H1 (cell line): ENCODE measurements at regions of chr14 and their contacts with region 1.

Region 1: GRCh38 chr14:58297762-58298476 is 436 bp upstream of the ARID4A start:
- DNase-seq: peak; percentile 94 to 99
- H3K4me3 ChIP-seq: peak overlapping the region; percentile 81 to 99 (median 92)
- H3K27ac ChIP-seq: peak overlapping the region; percentile 98
- H3K4me1 ChIP-seq: peaks cover 0 to 3% (median 0%) of the 10 kb centered on the region in 4 experiments; a peak in 2 of 7 replicates
- H3K27me3 ChIP-seq: no peaks in the 10 kb centered on the region
- CTCF ChIP-seq: no peak
- EP300 ChIP-seq: peak in 1 of 2 experiments; percentile 51; a peak in 1 of 3 replicates
- POLR2A ChIP-seq: peak; percentile 70 to 96; a peak in 2 of 3 replicates
- RAD21 ChIP-seq: no peak

Region 2: GRCh38 chr14:58244556-58245387 is 53.1 kb before region 1 on chr14 and contains the start of gene PSMA3:
- CTCF ChIA-PET with region 1: no interaction called
- POLR2A ChIA-PET with region 1: interaction called, 34 read pairs
- DNase-seq: peak; percentile 88 to 96
- H3K4me3 ChIP-seq: peak within 1 kb of the TSS; percentile 84 to 97 (median 88)
- H3K27ac ChIP-seq: peak within 1 kb of the TSS; percentile 92
- H3K4me1 ChIP-seq: peaks cover 0 to 5% (median 0%) of the 10 kb centered on the region in 4 experiments; a peak in 1 of 7 replicates
- H3K27me3 ChIP-seq: no peaks in the 10 kb centered on the region
- CTCF ChIP-seq: no peak
- EP300 ChIP-seq: no peak
- POLR2A ChIP-seq: peak; percentile 94 to 98
- RAD21 ChIP-seq: no peak
- total RNA-seq, gene PSMA3: 283 and 285 TPM in 2 replicates

Region 3: DNA sequence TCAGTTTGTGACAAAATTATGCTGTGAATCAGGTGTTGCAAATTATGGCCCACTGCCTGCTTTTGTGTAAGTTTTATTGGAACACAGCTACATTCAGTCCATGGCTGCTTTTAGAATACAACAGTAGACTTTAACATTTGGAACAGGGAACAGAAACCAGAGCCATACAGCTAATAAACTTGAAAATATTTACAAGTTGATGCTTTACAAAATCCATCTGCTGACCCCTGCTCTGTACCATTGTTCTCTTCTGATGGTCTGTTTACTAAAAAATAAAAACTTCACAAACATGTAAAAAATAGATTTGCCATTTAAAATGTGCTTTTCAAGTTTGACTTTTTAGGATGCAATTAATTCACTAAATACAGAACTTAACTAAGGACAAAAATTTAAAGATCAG is 32.5 kb before region 1 on chr14:
- CTCF ChIA-PET with region 1: no interaction called
- POLR2A ChIA-PET with region 1: interaction called, 25 read pairs
- DNase-seq: no peak
- H3K4me3 ChIP-seq: no peak overlapping the region
- H3K27ac ChIP-seq: no peak overlapping the region
- H3K4me1 ChIP-seq: no peaks in the 10 kb centered on the region
- H3K27me3 ChIP-seq: no peaks in the 10 kb centered on the region
- CTCF ChIP-seq: no peak
- EP300 ChIP-seq: no peak
- POLR2A ChIP-seq: peak in 1 of 2 experiments; percentile 28; a peak in 2 of 3 replicates
- RAD21 ChIP-seq: no peak

Region 4: GRCh38 chr14:58287607-58288042 is 10.3 kb before region 1 on chr14:
- CTCF ChIA-PET with region 1: no interaction called
- POLR2A ChIA-PET with region 1: interaction called, 11 read pairs
- DNase-seq: no peak
- H3K4me3 ChIP-seq: no peak overlapping the region
- H3K27ac ChIP-seq: no peak overlapping the region
- H3K4me1 ChIP-seq: no peaks in the 10 kb centered on the region
- H3K27me3 ChIP-seq: no peaks in the 10 kb centered on the region
- CTCF ChIP-seq: no peak
- EP300 ChIP-seq: no peak
- POLR2A ChIP-seq: no peak
- RAD21 ChIP-seq: no peak

Region 5: GRCh38 chr14:58367296-58367695 is 69.4 kb after region 1 on chr14:
- CTCF ChIA-PET with region 1: no interaction called
- POLR2A ChIA-PET with region 1: no interaction called
- DNase-seq: no peak
- H3K4me3 ChIP-seq: no peak overlapping the region
- H3K27ac ChIP-seq: no peak overlapping the region
- H3K4me1 ChIP-seq: no peaks in the 10 kb centered on the region
- H3K27me3 ChIP-seq: no peaks in the 10 kb centered on the region
- CTCF ChIP-seq: no peak
- EP300 ChIP-seq: no peak
- POLR2A ChIP-seq: no peak
- RAD21 ChIP-seq: no peak

Region 6: GRCh38 chr14:58395812-58396788 is 98.2 kb after region 1 on chr14 and contains the start of gene TOMM20L:
- CTCF ChIA-PET with region 1: no interaction called
- POLR2A ChIA-PET with region 1: interaction called, 17 read pairs
- DNase-seq: peak; percentile 53 to 90
- H3K4me3 ChIP-seq: peak within 1 kb of the TSS; percentile 51 to 68 (median 58)
- H3K27ac ChIP-seq: peak within 1 kb of the TSS; percentile 69
- H3K4me1 ChIP-seq: peaks cover 4 to 14% (median 7%) of the 10 kb centered on the region in 4 experiments; a peak in 6 of 7 replicates
- H3K27me3 ChIP-seq: peaks cover 0 to 9% (median 6%) of the 10 kb centered on the region in 4 experiments; a peak in 5 of 7 replicates
- CTCF ChIP-seq: peak; percentile 83 to 91 (median 89)
- EP300 ChIP-seq: peak in 1 of 2 experiments; percentile 64; a peak in 1 of 3 replicates
- POLR2A ChIP-seq: peak in 1 of 2 experiments; percentile 62; a peak in 1 of 3 replicates
- RAD21 ChIP-seq: peak in 1 of 2 experiments; percentile 53; a peak in 1 of 4 replicates
- total RNA-seq, gene TOMM20L: not detected in 2 replicates

Region 7: DNA sequence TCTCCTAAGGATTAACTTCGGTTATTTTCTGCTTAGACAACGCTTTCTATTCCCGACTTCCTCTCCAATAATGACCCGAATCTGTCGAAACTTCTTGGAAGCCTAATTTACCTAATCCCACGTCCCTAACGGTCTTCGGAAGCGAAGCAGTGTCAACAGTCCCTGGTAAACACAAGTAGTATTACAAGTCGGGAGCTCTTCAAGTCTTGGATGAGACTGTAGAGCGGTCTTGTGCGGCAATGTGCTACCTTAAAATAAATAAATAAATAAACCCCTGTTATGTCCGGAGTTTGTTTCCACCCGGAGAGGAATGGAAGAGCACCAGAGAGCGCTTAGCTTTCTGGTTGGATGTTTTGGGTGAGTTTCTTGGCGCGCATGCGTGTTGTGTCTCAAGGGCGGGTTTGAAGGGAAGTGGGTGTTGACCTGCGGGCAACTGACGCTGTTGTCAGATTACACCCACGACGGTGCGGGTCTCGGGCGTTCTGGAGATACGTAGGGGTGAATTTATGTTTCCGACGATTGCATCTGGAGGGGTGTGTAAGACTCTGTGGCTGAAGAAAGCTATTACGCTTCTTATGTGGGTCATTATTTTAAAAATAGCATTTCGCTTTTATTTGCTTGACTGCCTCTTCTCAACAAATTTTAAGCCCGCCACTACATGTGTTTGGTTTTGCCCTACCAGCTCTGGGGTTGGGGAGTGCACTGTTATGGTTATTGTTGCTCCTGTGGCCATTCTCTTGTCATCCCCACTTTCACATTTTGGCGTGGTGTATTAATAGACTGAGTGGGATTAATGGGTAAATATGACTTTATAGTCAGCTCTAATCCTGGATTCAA is 129.6 kb after region 1 on chr14 and contains the starts of genes KIAA0586 and TIMM9:
- CTCF ChIA-PET with region 1: no interaction called
- POLR2A ChIA-PET with region 1: interaction called, 21 read pairs
- DNase-seq: peak; percentile 84 to 90
- H3K4me3 ChIP-seq: peak within 1 kb of the TSS; percentile 54 to 85 (median 82)
- H3K27ac ChIP-seq: peak within 1 kb of the TSS; percentile 91
- H3K4me1 ChIP-seq: no peaks in the 10 kb centered on the region
- H3K27me3 ChIP-seq: no peaks in the 10 kb centered on the region
- CTCF ChIP-seq: no peak
- EP300 ChIP-seq: peak in 1 of 2 experiments; percentile 87; a peak in 1 of 3 replicates
- POLR2A ChIP-seq: peak in 1 of 2 experiments; percentile 21; a peak in 1 of 3 replicates
- RAD21 ChIP-seq: no peak
- total RNA-seq, gene KIAA0586: 21.6 and 24.8 TPM in 2 replicates
- total RNA-seq, gene TIMM9: 52.2 and 58.2 TPM in 2 replicates